ENCODE measurements at regions of chr5 and their contacts with region 1.

Region 1: DNA sequence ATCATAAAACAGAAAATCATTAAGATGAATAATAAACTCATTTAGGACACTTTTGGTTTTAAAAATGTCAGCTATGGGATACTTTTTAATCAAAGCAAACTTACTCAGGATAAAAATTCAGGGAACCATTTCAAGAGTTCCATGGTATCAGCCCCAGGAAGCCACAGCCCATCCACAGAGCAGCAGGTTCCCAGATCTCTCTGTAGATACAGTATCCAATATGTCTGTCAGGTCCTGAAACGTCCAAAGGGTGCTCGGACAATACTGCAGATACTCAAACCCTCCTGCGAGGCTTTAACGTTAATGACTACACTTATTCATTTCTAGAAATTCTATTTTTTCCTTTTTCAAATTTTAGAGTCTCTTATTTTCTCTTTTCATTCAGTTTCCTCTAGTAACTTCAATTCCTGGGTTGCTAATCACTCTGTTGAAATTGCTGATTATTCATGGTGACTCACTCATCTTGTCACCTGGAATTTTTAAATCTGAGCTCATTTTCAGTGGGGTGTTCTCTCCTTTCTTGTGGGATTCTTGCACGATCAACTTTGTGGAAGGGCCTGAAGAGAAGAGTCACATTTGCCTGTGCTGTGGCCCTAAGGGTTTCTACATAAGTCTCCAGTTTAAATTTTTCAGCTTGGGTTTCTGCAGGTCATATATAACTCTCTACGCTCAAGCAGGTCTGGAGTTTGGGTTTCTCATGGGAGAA is 435.8 kb downstream of the CTNND2 start:
- DNase-seq: peak; percentile 64
- ATAC-seq: peak; percentile 54
- H3K4me3 ChIP-seq: no peak overlapping the region
- H3K27ac ChIP-seq: no peak overlapping the region
- H3K4me1 ChIP-seq: peaks cover 7% of the 10 kb centered on the region; the same call in 1 of the 2 replicates
- H3K27me3 ChIP-seq: 0 out of 2 replicates have a peak, but pooled peaks cover 3% of the 10 kb centered on the region
- CTCF ChIP-seq: no peak

Region 2: DNA sequence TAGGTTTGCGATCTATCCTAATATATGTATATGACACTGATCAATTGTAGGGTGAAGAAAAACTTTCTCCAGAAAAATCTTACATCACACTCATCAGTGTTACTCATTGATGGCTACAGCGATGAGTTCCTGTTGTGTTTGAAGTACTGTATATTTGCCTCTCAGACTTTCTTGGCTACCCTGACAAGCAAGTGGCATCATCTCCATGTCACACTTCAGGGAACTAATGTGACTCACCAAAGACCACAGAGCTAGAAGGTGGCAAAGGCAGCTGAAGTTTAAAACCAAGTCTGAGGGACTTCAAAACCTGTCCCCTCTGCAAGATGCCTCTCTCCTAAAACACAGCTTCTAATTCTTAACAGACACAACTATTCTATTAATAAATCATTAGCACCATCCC is 15.6 kb before region 1 on chr5:
- CTCF ChIA-PET with region 1: interaction called, 10 read pairs
- POLR2A ChIA-PET with region 1: no interaction called
- intact Hi-C with region 1: no loop called
- DNase-seq: peak; percentile 15
- ATAC-seq: no peak
- H3K4me3 ChIP-seq: no peak overlapping the region
- H3K27ac ChIP-seq: no peak overlapping the region
- H3K4me1 ChIP-seq: no peaks in the 10 kb centered on the region
- H3K27me3 ChIP-seq: peaks cover 43% of the 10 kb centered on the region; the same call in 1 of the 2 replicates
- CTCF ChIP-seq: no peak

Measured in PC-3 (cell line).